ENCODE measurements at regions of chr9 and their contacts with region 1.

Region 1: GRCh38 chr9:83649080-83649479 is 26.1 kb downstream of the IDNK start:
- H3K4me3 ChIP-seq: no peak overlapping the region
- H3K27ac ChIP-seq: no peak overlapping the region
- H3K4me1 ChIP-seq: no peaks in the 10 kb centered on the region
- CTCF ChIP-seq: no peak

Region 2: GRCh38 chr9:83219152-83219923 is 429.7 kb before region 1 on chr9:
- CTCF ChIA-PET with region 1: no interaction called
- POLR2A ChIA-PET with region 1: no interaction called
- H3K4me3 ChIP-seq: peak overlapping the region; percentile 49
- H3K27ac ChIP-seq: no peak overlapping the region
- H3K4me1 ChIP-seq: 0 out of 2 replicates have a peak, but pooled peaks cover 2% of the 10 kb centered on the region
- CTCF ChIP-seq: 0 out of 2 replicates have a peak, but pooled peaks have one; percentile 11

Region 3: GRCh38 chr9:83620841-83621636 is 28.0 kb before region 1 on chr9:
- CTCF ChIA-PET with region 1: interaction called, 22 read pairs
- POLR2A ChIA-PET with region 1: no interaction called
- H3K4me3 ChIP-seq: no peak overlapping the region
- H3K27ac ChIP-seq: no peak overlapping the region
- H3K4me1 ChIP-seq: no peaks in the 10 kb centered on the region; the same call in 1 of the 2 replicates
- CTCF ChIP-seq: peak; percentile 46; the same call in 1 of the 2 replicates

Region 4: GRCh38 chr9:83636813-83637212 is 12.3 kb before region 1 on chr9:
- CTCF ChIA-PET with region 1: interaction called, 36 read pairs
- POLR2A ChIA-PET with region 1: no interaction called
- H3K4me3 ChIP-seq: no peak overlapping the region
- H3K27ac ChIP-seq: no peak overlapping the region
- H3K4me1 ChIP-seq: no peaks in the 10 kb centered on the region
- CTCF ChIP-seq: no peak

Region 5: DNA sequence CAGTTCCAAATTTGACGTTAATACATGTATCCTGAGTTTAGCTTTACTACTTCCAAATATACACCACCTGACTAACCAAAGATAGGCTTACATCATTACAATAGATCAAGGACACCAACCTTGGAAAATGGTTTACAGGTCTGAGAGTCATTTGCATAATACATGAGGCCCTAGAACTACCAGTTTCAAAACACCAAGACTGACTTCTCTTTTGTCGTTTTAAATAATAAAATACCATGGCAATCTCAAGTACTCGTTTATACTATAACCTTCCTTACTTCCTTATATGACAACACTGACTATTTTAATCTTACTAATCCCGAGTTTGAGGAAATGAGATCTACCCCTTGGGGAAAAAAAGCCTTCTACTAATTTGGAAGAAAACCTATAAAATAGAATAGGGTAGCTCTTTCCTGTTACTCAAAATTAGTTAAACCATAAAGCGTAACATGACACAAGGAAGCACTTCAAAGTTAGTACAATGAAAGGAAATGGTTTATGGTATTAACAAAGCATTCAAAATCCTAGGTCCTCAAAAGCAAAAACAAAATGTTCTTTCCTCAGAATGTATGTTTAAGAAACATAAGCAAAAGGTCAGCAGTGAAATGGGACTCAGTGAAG is 16.6 kb after region 1 on chr9:
- CTCF ChIA-PET with region 1: interaction called, 14 read pairs
- POLR2A ChIA-PET with region 1: no interaction called
- H3K4me3 ChIP-seq: no peak overlapping the region
- H3K27ac ChIP-seq: no peak overlapping the region
- H3K4me1 ChIP-seq: no peaks in the 10 kb centered on the region
- CTCF ChIP-seq: no peak